Caco-2 (cell line): ENCODE measurements at regions of chr18 and their contacts with region 1.

Region 1: GRCh38 chr18:41391616-41392595 is 563.1 kb upstream of the PIK3C3 start:
- DNase-seq: peak; percentile 35 to 43
- H3K4me3 ChIP-seq: no peak overlapping the region
- H3K4me3 Mint-ChIP-seq: peak overlapping the region; percentile 7
- H3K27ac Mint-ChIP-seq: peak overlapping the region; percentile 21
- H3K4me1 ChIP-seq: no peaks in the 10 kb centered on the region
- H3K4me1 Mint-ChIP-seq: peaks cover 6% of the 10 kb centered on the region
- H3K27me3 ChIP-seq: no peaks in the 10 kb centered on the region
- H3K27me3 Mint-ChIP-seq: no peaks in the 10 kb centered on the region
- CTCF ChIP-seq: peak; percentile 24 to 40

Region 2: DNA sequence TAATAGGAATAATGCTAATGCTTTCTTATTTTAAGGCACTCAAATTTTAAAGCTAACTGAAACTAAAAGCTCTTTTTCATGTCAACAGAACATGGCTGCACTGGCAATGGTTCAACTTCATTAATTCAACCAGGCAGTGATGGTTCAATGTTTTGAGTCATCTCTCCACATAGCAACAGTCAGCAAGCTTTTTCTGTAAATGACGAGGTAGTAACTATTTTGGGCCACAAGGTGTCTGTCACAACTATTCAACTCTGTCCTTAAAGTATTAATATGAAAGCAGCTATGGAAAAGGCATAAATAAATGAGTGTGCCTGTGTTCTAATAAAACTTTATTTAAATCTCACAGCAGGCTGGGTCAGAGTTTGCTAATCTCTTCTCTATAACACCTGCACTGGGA is 862.4 kb before region 1 on chr18:
- CTCF ChIA-PET with region 1: no interaction called
- POLR2A ChIA-PET with region 1: no interaction called
- intact Hi-C with region 1: loop called (anchors 5 kb)
- DNase-seq: no peak
- H3K4me3 ChIP-seq: no peak overlapping the region
- H3K4me3 Mint-ChIP-seq: no peak overlapping the region
- H3K27ac Mint-ChIP-seq: no peak overlapping the region
- H3K4me1 ChIP-seq: no peaks in the 10 kb centered on the region
- H3K4me1 Mint-ChIP-seq: no peaks in the 10 kb centered on the region
- H3K27me3 ChIP-seq: no peaks in the 10 kb centered on the region
- H3K27me3 Mint-ChIP-seq: no peaks in the 10 kb centered on the region
- CTCF ChIP-seq: no peak

Region 3: DNA sequence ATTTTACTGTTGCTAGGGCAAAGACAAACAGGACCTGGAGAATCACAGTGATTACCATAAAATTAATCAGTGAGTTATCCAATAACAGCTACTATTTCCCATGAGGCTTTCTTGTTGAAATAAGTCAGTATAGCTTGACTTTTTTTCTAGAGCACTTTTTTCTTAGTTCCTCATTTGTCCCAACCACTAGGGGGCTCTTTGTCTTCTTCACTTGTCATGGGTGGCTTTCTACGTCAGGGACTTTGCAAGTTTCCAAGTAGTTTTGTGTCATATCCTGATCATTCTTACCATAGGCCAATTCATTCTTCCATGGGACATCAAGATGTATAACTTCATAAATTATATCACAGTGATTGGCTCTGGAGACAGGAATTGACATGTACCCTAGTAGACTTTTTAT is 456.5 kb before region 1 on chr18:
- CTCF ChIA-PET with region 1: no interaction called
- POLR2A ChIA-PET with region 1: no interaction called
- intact Hi-C with region 1: loop called (anchors 5 kb)
- DNase-seq: peak in 1 of 2 experiments; percentile 11
- H3K4me3 ChIP-seq: no peak overlapping the region
- H3K4me3 Mint-ChIP-seq: no peak overlapping the region
- H3K27ac Mint-ChIP-seq: no peak overlapping the region
- H3K4me1 ChIP-seq: no peaks in the 10 kb centered on the region
- H3K4me1 Mint-ChIP-seq: no peaks in the 10 kb centered on the region
- H3K27me3 ChIP-seq: no peaks in the 10 kb centered on the region
- H3K27me3 Mint-ChIP-seq: peaks cover 5% of the 10 kb centered on the region
- CTCF ChIP-seq: peak; percentile 26 to 27

Region 4: GRCh38 chr18:41347057-41347456 is 44.8 kb before region 1 on chr18:
- CTCF ChIA-PET with region 1: no interaction called
- POLR2A ChIA-PET with region 1: no interaction called
- intact Hi-C with region 1: no loop called
- DNase-seq: no peak
- H3K4me3 ChIP-seq: no peak overlapping the region
- H3K4me3 Mint-ChIP-seq: no peak overlapping the region
- H3K27ac Mint-ChIP-seq: no peak overlapping the region
- H3K4me1 ChIP-seq: no peaks in the 10 kb centered on the region
- H3K4me1 Mint-ChIP-seq: no peaks in the 10 kb centered on the region
- H3K27me3 ChIP-seq: no peaks in the 10 kb centered on the region
- H3K27me3 Mint-ChIP-seq: no peaks in the 10 kb centered on the region
- CTCF ChIP-seq: no peak

Region 5: DNA sequence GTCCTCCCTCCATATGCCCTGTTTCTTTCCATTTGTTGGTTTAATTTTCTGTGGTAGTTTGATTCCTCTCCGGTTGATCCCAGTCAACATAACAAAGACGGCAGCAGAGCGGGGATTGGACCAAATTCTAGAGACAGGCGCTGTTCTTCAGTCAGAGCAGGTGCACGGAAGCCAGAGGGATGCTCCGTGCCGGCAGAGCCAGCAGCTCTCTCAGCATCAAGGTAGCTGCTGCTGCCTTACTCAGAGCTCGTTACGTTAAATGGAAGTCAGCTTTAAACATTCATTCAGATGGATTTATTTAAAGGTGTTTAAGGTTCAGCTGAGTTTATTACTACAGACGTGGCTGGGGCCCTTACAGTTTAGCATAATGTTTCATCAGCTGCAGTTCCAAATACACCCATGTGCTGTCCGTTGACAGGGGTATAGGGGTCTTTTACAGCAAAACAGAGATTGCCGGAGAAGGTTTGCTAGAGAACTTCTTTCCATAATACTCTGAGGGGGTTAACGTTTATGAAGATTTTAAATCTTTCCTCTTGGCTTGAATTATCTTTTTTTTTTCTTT is 65.9 kb after region 1 on chr18:
- CTCF ChIA-PET with region 1: no interaction called
- POLR2A ChIA-PET with region 1: no interaction called
- intact Hi-C with region 1: no loop called
- DNase-seq: no peak
- H3K4me3 ChIP-seq: no peak overlapping the region
- H3K4me3 Mint-ChIP-seq: no peak overlapping the region
- H3K27ac Mint-ChIP-seq: no peak overlapping the region
- H3K4me1 ChIP-seq: peaks cover 4% of the 10 kb centered on the region; the same call in 1 of the 2 replicates
- H3K4me1 Mint-ChIP-seq: peaks cover 11% of the 10 kb centered on the region
- H3K27me3 ChIP-seq: no peaks in the 10 kb centered on the region
- H3K27me3 Mint-ChIP-seq: no peaks in the 10 kb centered on the region
- CTCF ChIP-seq: no peak

Region 6: DNA sequence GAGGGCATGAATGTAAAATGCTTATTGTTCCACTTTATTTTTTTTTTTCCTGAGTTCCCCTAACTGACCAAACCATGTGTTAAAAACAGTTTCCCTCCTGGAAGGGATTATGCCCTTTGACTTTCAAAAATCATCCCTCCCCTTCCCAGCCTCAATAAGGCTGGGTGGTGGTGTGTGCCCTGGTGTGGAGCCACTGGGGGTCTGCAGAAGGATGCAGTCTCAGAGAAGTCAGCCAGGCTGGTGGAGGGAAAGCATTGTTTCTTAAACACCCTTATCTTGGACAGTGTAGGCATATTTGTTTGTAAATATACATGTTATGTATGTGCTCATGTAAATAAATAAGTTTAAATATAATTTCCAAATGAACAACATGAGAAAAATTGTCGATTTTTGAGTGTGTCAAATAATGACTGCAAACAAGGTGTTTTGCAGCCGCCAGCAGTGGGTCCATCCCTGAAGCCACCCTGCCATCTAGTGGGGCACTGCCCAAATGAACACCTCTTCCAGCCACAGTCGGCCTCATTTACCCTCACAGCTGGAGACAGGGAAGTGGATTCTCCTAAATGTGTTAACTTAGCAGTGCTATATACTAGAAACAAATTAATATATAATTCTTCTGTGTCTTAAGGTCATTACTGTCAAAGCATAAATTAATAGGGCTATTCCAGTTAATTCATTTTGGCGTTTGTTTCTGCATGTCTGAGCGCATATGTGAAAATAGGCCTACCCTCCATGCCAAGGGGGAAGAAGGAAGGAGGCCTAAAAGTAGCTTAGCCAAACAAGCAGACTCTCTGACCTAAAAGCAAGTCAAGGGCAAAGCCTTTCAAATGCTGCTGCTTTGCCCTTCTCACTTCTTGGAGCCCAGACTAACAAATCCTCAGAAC is 353.5 kb after region 1 on chr18:
- CTCF ChIA-PET with region 1: no interaction called
- POLR2A ChIA-PET with region 1: no interaction called
- intact Hi-C with region 1: loop called (anchors 5 kb)
- DNase-seq: peak; percentile 18 to 34
- H3K4me3 ChIP-seq: no peak overlapping the region
- H3K4me3 Mint-ChIP-seq: no peak overlapping the region
- H3K27ac Mint-ChIP-seq: no peak overlapping the region
- H3K4me1 ChIP-seq: no peaks in the 10 kb centered on the region
- H3K4me1 Mint-ChIP-seq: no peaks in the 10 kb centered on the region
- H3K27me3 ChIP-seq: no peaks in the 10 kb centered on the region
- H3K27me3 Mint-ChIP-seq: peaks cover 4% of the 10 kb centered on the region
- CTCF ChIP-seq: peak; percentile 32 to 47

Region 7: DNA sequence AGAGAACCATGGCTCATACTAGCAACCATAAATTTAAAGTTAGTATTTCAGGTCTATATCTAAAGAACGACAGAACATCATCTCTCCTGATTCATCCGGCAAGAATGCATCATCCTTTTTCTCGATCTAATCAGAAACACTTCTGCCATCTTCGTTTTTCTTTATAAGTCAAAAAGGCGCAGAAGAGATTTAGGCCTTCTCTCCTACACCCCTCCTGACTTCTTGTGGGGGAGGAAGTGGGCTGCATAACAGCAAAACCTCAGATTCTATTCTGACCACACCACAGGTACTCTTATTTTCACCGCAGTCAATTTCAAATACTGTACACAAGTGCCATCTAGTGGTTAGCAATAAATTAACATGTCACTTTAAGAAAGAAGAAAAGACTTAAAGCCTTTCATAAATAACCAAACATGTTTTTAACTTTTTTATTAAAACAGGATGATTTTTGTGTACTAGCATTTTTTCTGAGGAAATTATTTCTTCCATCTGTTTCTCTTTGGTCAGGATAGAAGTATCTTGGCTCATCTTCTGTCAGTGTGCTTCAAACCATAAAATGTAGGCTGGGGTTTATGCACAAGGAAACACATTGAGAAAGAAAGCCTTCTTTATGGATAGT is 514.7 kb after region 1 on chr18:
- CTCF ChIA-PET with region 1: no interaction called
- POLR2A ChIA-PET with region 1: no interaction called
- intact Hi-C with region 1: loop called (anchors 10 kb)
- DNase-seq: peak in 1 of 2 experiments; percentile 3
- H3K4me3 ChIP-seq: no peak overlapping the region
- H3K4me3 Mint-ChIP-seq: no peak overlapping the region
- H3K27ac Mint-ChIP-seq: no peak overlapping the region
- H3K4me1 ChIP-seq: no peaks in the 10 kb centered on the region
- H3K4me1 Mint-ChIP-seq: no peaks in the 10 kb centered on the region
- H3K27me3 ChIP-seq: no peaks in the 10 kb centered on the region
- H3K27me3 Mint-ChIP-seq: peaks cover 3% of the 10 kb centered on the region
- CTCF ChIP-seq: peak; percentile 18 to 40